Activated T-helper 2 cell treated with anti-CD3 and anti-CD28 coated beads, Interferon-gamma antibody, Interleukin-2, Interleukin-4, amounts not matched to agents 10 μg/mL and 5 μg/mL and 100 μg/mL, durations not matched to agents 14 hours and 24 hours and 36 hours (primary cell): ENCODE measurements at regions of chr1 and their contacts with region 1.

Region 1: DNA sequence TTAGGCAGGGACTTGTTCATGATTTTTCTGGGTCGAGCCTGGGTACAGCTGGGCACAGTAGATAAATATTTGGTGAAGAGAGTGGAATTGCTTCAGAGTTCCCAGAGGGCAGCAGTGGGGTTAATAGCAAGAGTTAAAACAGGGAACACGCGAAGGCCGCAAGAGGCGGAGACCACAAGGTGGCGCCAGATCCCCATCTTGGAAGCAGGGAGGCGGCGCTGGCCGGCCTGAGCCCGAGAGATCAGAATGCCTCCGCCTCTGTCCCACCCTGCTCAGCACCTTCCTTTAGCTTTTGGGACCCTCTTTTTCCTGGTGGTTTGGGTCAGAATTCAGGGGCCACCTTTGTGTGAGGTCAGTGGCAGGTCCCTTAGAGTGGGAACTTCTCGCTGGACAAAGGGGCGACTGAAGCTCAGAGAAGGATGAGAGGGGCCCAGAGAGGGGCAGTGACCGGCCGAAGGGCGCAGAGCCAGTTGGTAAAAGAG is 6.5 kb upstream of the PADI2 start:
- DNase-seq: peak; percentile 58
- H3K4me3 Mint-ChIP-seq: no peak overlapping the region
- H3K27ac Mint-ChIP-seq: no peak overlapping the region
- H3K4me1 Mint-ChIP-seq: no peaks in the 10 kb centered on the region
- H3K27me3 Mint-ChIP-seq: peaks cover 4% of the 10 kb centered on the region

Region 2: GRCh38 chr1:17236779-17237560 is 111.2 kb after region 1 on chr1:
- intact Hi-C with region 1: loop called (anchors 1 kb)
- DNase-seq: peak; percentile 67
- H3K4me3 Mint-ChIP-seq: no peak overlapping the region
- H3K27ac Mint-ChIP-seq: no peak overlapping the region
- H3K4me1 Mint-ChIP-seq: no peaks in the 10 kb centered on the region
- H3K27me3 Mint-ChIP-seq: no peaks in the 10 kb centered on the region